Dorsolateral prefrontal cortex (tissue), 120 donors: ENCODE measurements at regions of chr15 and their contacts with region 1.

Region 1: DNA sequence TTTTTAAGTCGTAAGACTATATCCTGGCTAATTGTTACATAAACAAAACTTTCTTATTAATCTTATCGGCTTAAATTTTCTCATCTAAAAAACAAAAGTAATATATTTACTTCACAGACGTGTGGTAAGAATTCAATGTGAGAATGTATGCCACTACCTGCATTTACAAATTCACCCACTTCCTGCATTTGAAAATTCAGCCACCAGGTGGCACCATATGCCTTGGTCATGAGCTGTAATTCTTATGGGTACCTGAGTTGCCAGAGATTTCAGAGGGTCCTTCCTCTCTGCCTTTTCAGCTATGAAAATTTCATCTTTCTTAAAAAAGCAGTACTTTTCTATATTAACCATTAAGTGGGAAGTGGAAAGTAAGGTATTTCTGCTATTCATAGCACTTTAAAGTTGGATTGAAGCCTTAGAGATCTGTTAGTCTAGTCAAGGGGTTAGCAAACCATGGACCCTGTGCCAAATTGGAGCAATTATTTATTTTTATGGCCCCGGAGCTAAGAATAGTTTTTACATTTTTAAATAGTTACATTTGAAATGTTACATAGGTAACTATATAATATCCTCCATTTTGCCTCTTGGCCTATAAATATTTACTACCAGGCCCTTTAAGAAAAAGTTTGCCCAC is 127.8 kb downstream of the HCN4 start:
- DNase-seq: peak in 8 of 10 donors; percentile 42 to 89 (median 65)
- H3K4me3 ChIP-seq: no peak overlapping the region
- H3K27ac ChIP-seq: peak overlapping the region in 1 of 59 donors; percentile 20
- H3K27me3 ChIP-seq: no peaks in the 10 kb centered on the region
- CTCF ChIP-seq: peak; percentile 81 to 98 (median 91)

Region 2: DNA sequence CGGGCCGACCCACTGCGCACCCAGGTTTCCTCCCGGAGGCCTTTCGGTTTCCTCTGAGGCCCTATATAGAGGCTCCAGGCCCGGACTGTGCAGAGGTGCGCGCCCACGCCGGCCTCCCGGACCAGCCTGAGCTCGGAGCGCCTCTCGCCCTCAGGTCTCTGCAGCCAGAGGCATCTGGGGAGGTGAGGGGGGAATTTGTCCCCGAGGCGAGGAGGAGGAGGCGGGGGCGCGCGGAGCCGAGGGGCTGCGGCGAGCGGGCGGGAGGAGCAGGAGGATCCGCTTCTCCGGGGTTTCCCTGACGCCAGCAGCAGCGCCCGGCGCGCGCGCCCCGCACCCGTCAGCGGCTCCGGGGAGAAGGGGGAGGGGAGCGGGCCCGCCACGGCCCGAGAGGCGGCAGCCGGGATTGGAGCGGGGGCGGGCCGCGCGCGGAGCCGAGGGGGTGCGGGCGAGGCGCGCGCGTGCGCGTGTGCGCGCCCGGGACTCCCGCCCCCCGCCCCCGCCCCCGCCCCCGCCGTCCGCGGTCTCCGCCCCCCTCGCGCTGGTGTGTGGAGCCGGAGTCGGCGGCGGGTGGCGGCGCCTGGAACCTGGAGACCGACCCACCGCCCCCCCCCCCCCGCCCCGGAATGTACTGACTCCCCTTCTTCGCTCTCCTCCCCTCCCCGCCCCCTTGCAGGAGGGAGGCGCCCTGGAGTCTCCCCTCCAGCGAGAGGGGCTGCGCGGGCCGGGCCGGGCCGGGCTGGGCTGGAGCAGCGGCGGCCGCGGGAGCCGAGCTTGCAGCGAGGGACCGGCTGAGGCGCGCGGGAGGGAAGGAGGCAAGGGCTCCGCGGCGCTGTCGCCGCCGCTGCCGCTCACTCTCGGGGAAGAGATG is 188.9 kb before region 1 on chr15 and contains the start of gene NEO1:
- intact Hi-C with region 1: loop called in 1 of 2 experiments (anchors 10 kb)
- DNase-seq: peak; percentile 77 to 93 (median 87)
- H3K4me3 ChIP-seq: peak within 1 kb of the TSS; percentile 71 to 92 (median 80)
- H3K27ac ChIP-seq: peak within 1 kb of the TSS; percentile 80 to 100 (median 99)
- H3K27me3 ChIP-seq: no peaks in the 10 kb centered on the region
- CTCF ChIP-seq: peak in 1 of 56 donors; percentile 26
- total RNA-seq, gene NEO1: 53.3 to 164 (median 83.2) TPM